ENCODE measurements at regions of chr9 and their contacts with region 1.

Region 1: GRCh38 chr9:69421908-69422801 is 97.1 kb downstream of the ENTREP1 start:
- DNase-seq: peak; percentile 48
- ATAC-seq: peak; percentile 85
- H3K4me3 ChIP-seq: no peak overlapping the region
- H3K27ac ChIP-seq: no peak overlapping the region
- H3K4me1 ChIP-seq: no peaks in the 10 kb centered on the region
- H3K27me3 ChIP-seq: peaks cover 0 to 4% of the 10 kb centered on the region in 2 experiments; a peak in 1 of 5 replicates
- CTCF ChIP-seq: peak; percentile 89
- EP300 ChIP-seq: no peak
- POLR2A ChIP-seq: no peak
- RAD21 ChIP-seq: peak; percentile 85

Region 2: DNA sequence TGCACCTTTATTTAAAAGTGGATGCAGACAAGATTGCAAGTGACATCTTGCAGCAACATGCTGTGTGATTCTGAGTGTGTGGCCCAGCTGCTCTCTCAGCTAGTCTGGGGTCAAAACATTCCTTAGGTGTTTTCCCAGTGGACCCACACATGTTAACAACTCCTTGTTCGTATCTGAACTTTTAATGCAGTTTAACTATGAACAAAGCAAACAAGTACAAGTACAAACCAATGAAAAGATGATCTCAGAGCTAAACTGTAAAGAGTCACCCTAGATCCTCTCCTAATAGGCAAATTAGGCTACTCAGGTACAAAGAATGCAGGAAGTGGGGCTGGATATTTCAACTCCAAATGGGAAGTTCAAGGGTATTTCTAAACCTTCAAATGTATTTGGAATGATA is 11.2 kb after region 1 on chr9:
- CTCF ChIA-PET with region 1: no interaction called
- POLR2A ChIA-PET with region 1: no interaction called
- in situ Hi-C with region 1: no loop called
- intact Hi-C with region 1: no loop called
- DNase-seq: no peak
- ATAC-seq: no peak
- H3K4me3 ChIP-seq: no peak overlapping the region
- H3K27ac ChIP-seq: no peak overlapping the region
- H3K4me1 ChIP-seq: no peaks in the 10 kb centered on the region
- H3K27me3 ChIP-seq: peaks cover 5 to 10% of the 10 kb centered on the region in 2 experiments; a peak in 2 of 5 replicates
- CTCF ChIP-seq: no peak
- EP300 ChIP-seq: no peak
- POLR2A ChIP-seq: no peak
- RAD21 ChIP-seq: no peak

Region 3: GRCh38 chr9:69549310-69550202 is 127.4 kb after region 1 on chr9:
- CTCF ChIA-PET with region 1: interaction called, 87 read pairs
- POLR2A ChIA-PET with region 1: no interaction called
- in situ Hi-C with region 1: loop called (anchors 5 kb)
- intact Hi-C with region 1: loop called (anchors 1 kb)
- DNase-seq: peak; percentile 45
- ATAC-seq: peak; percentile 52
- H3K4me3 ChIP-seq: no peak overlapping the region
- H3K27ac ChIP-seq: no peak overlapping the region
- H3K4me1 ChIP-seq: no peaks in the 10 kb centered on the region
- H3K27me3 ChIP-seq: peaks cover 1 to 7% of the 10 kb centered on the region in 2 experiments; a peak in 1 of 5 replicates
- CTCF ChIP-seq: peak; percentile 82
- EP300 ChIP-seq: no peak
- POLR2A ChIP-seq: no peak
- RAD21 ChIP-seq: peak; percentile 43; the same call in 1 of the 2 replicates

Region 4: GRCh38 chr9:69649566-69650250 is 227.6 kb after region 1 on chr9:
- CTCF ChIA-PET with region 1: no interaction called
- POLR2A ChIA-PET with region 1: no interaction called
- in situ Hi-C with region 1: no loop called
- intact Hi-C with region 1: loop called (anchors 10 kb)
- DNase-seq: no peak
- ATAC-seq: no peak
- H3K4me3 ChIP-seq: no peak overlapping the region
- H3K27ac ChIP-seq: no peak overlapping the region
- H3K4me1 ChIP-seq: no peaks in the 10 kb centered on the region
- H3K27me3 ChIP-seq: no peaks in the 10 kb centered on the region
- CTCF ChIP-seq: no peak
- EP300 ChIP-seq: no peak
- POLR2A ChIP-seq: no peak
- RAD21 ChIP-seq: no peak

Region 5: DNA sequence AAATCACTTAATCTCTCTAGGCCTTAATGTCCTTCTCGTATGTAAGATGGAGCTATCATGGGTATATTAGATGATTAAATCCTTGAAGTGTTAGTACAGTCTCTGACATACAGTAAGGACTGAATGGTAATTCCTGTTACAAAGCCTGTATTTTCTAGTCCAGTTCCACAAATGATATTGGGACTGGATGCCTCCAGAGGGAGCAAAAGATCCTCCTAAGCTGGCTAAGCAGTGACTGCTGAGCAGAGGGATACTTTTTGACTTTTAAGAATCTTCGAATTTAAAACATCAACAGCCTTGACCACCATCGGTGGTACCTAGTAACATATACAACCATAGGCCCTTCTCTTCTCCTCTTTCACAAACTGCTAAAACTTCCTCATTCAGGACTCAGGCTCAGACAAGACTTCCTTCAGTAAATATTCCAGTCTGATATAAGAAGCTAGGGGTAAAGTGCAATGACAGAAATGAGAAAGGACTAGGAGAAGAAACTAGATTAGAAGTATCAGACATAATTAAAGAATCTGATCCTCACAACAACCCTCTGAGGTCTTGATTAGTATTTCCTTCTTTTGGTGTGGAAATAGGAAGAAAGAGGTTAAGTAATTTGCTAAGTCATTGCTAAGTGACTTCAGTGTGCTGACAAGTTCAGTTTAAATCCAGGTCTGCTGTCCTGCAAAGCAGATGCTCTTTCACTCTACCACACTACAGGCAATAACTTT is 323.7 kb after region 1 on chr9:
- CTCF ChIA-PET with region 1: no interaction called
- POLR2A ChIA-PET with region 1: no interaction called
- in situ Hi-C with region 1: no loop called
- intact Hi-C with region 1: loop called (anchors 10 kb)
- DNase-seq: peak; percentile 14
- ATAC-seq: peak; percentile 20; the same call in 1 of the 3 replicates
- H3K4me3 ChIP-seq: no peak overlapping the region
- H3K27ac ChIP-seq: peak overlapping the region; percentile 66
- H3K4me1 ChIP-seq: peaks cover 60% of the 10 kb centered on the region
- H3K27me3 ChIP-seq: no peaks in the 10 kb centered on the region
- CTCF ChIP-seq: peak; percentile 40
- EP300 ChIP-seq: no peak
- POLR2A ChIP-seq: no peak
- RAD21 ChIP-seq: no peak

Region 6: GRCh38 chr9:69877854-69878514 is 455.8 kb after region 1 on chr9:
- CTCF ChIA-PET with region 1: interaction called, 3 read pairs
- POLR2A ChIA-PET with region 1: no interaction called
- in situ Hi-C with region 1: no loop called
- intact Hi-C with region 1: loop called (anchors 2 kb)
- DNase-seq: peak; percentile 43
- ATAC-seq: peak; percentile 75
- H3K4me3 ChIP-seq: no peak overlapping the region
- H3K27ac ChIP-seq: no peak overlapping the region
- H3K4me1 ChIP-seq: no peaks in the 10 kb centered on the region
- H3K27me3 ChIP-seq: peaks cover 0 to 4% of the 10 kb centered on the region in 2 experiments; a peak in 1 of 5 replicates
- CTCF ChIP-seq: peak; percentile 71
- EP300 ChIP-seq: no peak
- POLR2A ChIP-seq: no peak
- RAD21 ChIP-seq: peak; percentile 59; the same call in 1 of the 2 replicates

Region 7: GRCh38 chr9:69932901-69933300 is 510.7 kb after region 1 on chr9:
- CTCF ChIA-PET with region 1: no interaction called
- POLR2A ChIA-PET with region 1: no interaction called
- in situ Hi-C with region 1: no loop called
- intact Hi-C with region 1: loop called (anchors 2 kb)
- DNase-seq: peak; percentile 36
- ATAC-seq: peak; percentile 87
- H3K4me3 ChIP-seq: no peak overlapping the region
- H3K27ac ChIP-seq: no peak overlapping the region
- H3K4me1 ChIP-seq: no peaks in the 10 kb centered on the region
- H3K27me3 ChIP-seq: no peaks in the 10 kb centered on the region
- CTCF ChIP-seq: peak; percentile 52
- EP300 ChIP-seq: no peak
- POLR2A ChIP-seq: no peak
- RAD21 ChIP-seq: no peak